A673 (cell line): ENCODE measurements at regions of chr7 and their contacts with region 1.

Region 1: GRCh38 chr7:24722386-24723177 is 34.7 kb downstream of the GSDME start:
- DNase-seq: peak; percentile 65
- H3K4me3 ChIP-seq: no peak overlapping the region
- H3K27ac ChIP-seq: no peak overlapping the region
- H3K4me1 ChIP-seq: no peaks in the 10 kb centered on the region
- H3K27me3 ChIP-seq: no peaks in the 10 kb centered on the region
- CTCF ChIP-seq: peak; percentile 56

Region 2: DNA sequence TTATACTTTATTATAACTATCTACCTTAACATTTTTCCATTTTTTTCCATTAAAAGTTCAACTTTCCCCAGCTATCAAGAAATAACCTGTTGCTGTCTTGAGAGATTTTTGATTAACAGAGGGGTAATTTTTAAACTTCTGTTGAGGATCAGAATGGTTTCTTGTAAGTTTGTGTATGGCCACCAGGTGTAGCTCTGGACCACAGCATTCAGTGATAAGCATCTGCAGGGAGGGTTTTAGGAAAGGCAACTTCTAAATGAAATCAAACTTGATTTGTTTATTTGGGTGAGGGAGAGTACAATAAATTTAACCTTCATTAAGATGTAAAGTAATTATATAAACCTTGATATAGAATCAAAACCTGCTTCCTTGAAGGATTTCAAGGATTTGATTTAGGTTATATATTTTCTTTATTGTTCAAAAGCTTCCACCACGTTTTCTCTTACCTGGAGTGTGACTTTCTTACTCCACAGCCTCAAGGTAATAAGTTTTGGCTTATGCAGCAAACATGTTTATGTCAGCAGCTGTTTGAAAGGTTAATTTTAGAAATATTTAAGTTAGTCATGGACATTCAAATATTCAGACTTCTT is 859.3 kb before region 1 on chr7:
- CTCF ChIA-PET with region 1: no interaction called
- POLR2A ChIA-PET with region 1: no interaction called
- intact Hi-C with region 1: loop called (anchors 10 kb)
- DNase-seq: peak; percentile 65
- H3K4me3 ChIP-seq: no peak overlapping the region
- H3K27ac ChIP-seq: no peak overlapping the region
- H3K4me1 ChIP-seq: no peaks in the 10 kb centered on the region
- H3K27me3 ChIP-seq: no peaks in the 10 kb centered on the region
- CTCF ChIP-seq: peak; percentile 77

Region 3: GRCh38 chr7:24392774-24393173 is 329.8 kb before region 1 on chr7:
- CTCF ChIA-PET with region 1: no interaction called
- POLR2A ChIA-PET with region 1: no interaction called
- intact Hi-C with region 1: loop called (anchors 5 kb)
- DNase-seq: no peak
- H3K4me3 ChIP-seq: no peak overlapping the region
- H3K27ac ChIP-seq: no peak overlapping the region
- H3K4me1 ChIP-seq: no peaks in the 10 kb centered on the region
- H3K27me3 ChIP-seq: no peaks in the 10 kb centered on the region
- CTCF ChIP-seq: no peak

Region 4: GRCh38 chr7:24531255-24531654 is 191.3 kb before region 1 on chr7:
- CTCF ChIA-PET with region 1: no interaction called
- POLR2A ChIA-PET with region 1: no interaction called
- intact Hi-C with region 1: no loop called
- DNase-seq: no peak
- H3K4me3 ChIP-seq: no peak overlapping the region
- H3K27ac ChIP-seq: no peak overlapping the region
- H3K4me1 ChIP-seq: no peaks in the 10 kb centered on the region
- H3K27me3 ChIP-seq: no peaks in the 10 kb centered on the region
- CTCF ChIP-seq: no peak

Region 5: GRCh38 chr7:24979863-24980533 is 257.4 kb after region 1 on chr7 and contains the start of gene OSBPL3:
- CTCF ChIA-PET with region 1: no interaction called
- POLR2A ChIA-PET with region 1: no interaction called
- intact Hi-C with region 1: no loop called
- DNase-seq: peak; percentile 97
- H3K4me3 ChIP-seq: peak within 1 kb of the TSS; percentile 82
- H3K27ac ChIP-seq: peak within 1 kb of the TSS; percentile 76
- H3K4me1 ChIP-seq: peaks cover 16% of the 10 kb centered on the region
- H3K27me3 ChIP-seq: no peaks in the 10 kb centered on the region
- CTCF ChIP-seq: no peak
- total RNA-seq, gene OSBPL3: 17.1 and 21.4 TPM in 2 replicates